PC-9 (cell line): ENCODE measurements at regions of chr9 and their contacts with region 1.

Region 1: DNA sequence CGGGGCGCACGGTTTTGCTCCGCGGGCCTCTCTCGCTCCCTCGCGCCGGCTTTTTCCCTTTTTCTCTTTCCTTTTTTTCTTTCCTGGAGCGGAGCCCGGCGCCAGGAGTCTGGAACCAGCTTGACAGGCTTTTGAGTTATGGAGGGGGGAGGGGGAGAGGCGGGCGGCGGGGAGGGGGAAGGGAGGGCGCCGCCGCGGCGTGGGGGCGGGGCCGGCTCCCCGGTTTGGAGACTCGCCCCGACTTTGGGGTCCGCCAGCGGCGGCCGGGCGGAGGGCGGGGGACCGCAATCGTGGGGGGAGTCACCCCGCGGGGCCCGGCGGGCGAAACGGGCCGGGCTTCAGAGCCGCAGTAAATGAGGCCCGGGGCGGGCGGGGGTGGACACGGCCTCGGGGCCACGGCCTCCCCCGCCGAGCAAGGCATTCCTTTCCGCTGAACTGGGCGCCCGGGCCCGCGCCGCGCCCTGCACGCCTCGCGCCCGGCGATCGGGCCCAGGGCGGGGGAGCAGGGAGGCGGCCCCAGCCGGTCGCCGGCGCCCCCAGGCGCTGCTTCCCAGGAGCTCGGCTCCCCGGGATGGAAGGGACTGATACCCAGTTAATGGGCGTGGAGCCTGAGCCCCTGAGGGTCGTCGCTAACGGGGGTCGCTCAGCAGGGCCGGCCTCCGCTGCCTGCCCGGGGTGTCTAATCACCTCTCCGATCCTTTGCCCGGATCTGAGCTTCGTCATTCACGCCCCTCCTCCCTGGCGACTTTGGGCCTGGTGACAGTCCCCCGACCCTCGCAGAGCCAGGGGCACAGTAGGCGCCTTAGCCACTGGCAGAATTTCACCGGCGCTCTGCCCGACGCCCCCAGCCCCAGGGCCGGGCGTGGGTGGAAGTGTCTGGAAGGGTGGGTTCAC is 138.1 kb downstream of the C9orf50 start:
- DNase-seq: peak; percentile 69 to 92
- H3K4me3 ChIP-seq: peak overlapping the region; percentile 88
- H3K27ac ChIP-seq: peak overlapping the region; percentile 99
- H3K4me1 ChIP-seq: peaks cover 82% of the 10 kb centered on the region
- H3K27me3 ChIP-seq: no peaks in the 10 kb centered on the region
- CTCF ChIP-seq: no peak

Region 2: GRCh38 chr9:129028192-129028957 is 454.4 kb before region 1 on chr9 and contains the start of gene SH3GLB2:
- CTCF ChIA-PET with region 1: no interaction called
- POLR2A ChIA-PET with region 1: no interaction called
- intact Hi-C with region 1: loop called (anchors 10 kb)
- DNase-seq: peak; percentile 73 to 98
- H3K4me3 ChIP-seq: peak within 1 kb of the TSS; percentile 63
- H3K27ac ChIP-seq: peak within 1 kb of the TSS; percentile 48
- H3K4me1 ChIP-seq: peaks cover 47% of the 10 kb centered on the region
- H3K27me3 ChIP-seq: no peaks in the 10 kb centered on the region
- CTCF ChIP-seq: peak; percentile 86
- total RNA-seq, gene SH3GLB2: 184 and 213 TPM in 2 replicates

Region 3: GRCh38 chr9:129258124-129258822 is 224.5 kb before region 1 on chr9:
- CTCF ChIA-PET with region 1: no interaction called
- POLR2A ChIA-PET with region 1: no interaction called
- intact Hi-C with region 1: no loop called
- DNase-seq: peak; percentile 78 to 90
- H3K4me3 ChIP-seq: peak overlapping the region; percentile 50
- H3K27ac ChIP-seq: no peak overlapping the region
- H3K4me1 ChIP-seq: peaks cover 16% of the 10 kb centered on the region
- H3K27me3 ChIP-seq: 0 out of 2 replicates have a peak, but pooled peaks cover 5% of the 10 kb centered on the region
- CTCF ChIP-seq: no peak

Region 4: GRCh38 chr9:129278391-129279237 is 204.2 kb before region 1 on chr9:
- CTCF ChIA-PET with region 1: no interaction called
- POLR2A ChIA-PET with region 1: interaction called, 4 read pairs
- intact Hi-C with region 1: loop called (anchors 2 kb)
- DNase-seq: peak; percentile 86 to 97
- H3K4me3 ChIP-seq: peak overlapping the region; percentile 58; the same call in 1 of the 2 replicates
- H3K27ac ChIP-seq: peak overlapping the region; percentile 79
- H3K4me1 ChIP-seq: peaks cover 51% of the 10 kb centered on the region
- H3K27me3 ChIP-seq: no peaks in the 10 kb centered on the region
- CTCF ChIP-seq: no peak

Region 5: DNA sequence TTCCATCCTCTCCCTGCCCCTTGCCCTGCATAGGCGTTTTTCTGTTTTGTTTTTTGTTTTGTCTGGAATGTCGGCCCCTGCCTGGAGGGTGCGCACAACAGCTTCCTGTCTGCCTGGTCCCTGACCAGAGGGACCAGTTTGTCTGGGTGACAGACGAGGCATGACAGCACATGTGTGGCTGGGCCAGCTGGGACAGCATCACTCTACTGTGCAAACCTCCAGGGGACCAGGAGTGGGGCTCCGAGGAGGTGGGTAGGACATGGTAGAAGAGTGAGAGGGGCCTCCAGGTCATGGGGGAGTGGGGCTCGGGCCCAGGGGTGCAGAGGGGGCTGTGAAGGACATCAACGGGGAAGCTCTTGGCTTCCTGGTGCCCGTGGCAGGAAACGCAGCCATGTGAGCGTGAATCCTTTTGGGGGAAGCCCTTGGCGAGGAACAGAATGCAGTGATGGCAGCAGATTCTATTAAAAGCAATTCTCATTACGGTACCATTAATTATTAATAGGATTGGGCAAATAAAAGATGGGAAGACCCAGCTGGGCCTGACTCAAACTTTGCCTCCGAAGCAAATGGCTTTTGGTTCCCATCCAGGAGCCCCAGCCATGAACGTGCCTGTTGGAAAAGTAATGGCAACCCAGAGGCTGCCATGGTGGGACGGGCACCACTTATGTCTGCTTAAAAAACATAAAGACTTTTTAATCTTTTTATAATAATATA is 120.3 kb before region 1 on chr9:
- CTCF ChIA-PET with region 1: no interaction called
- POLR2A ChIA-PET with region 1: no interaction called
- intact Hi-C with region 1: loop called (anchors 1 kb)
- DNase-seq: peak; percentile 77 to 80
- H3K4me3 ChIP-seq: no peak overlapping the region
- H3K27ac ChIP-seq: no peak overlapping the region
- H3K4me1 ChIP-seq: peaks cover 25% of the 10 kb centered on the region
- H3K27me3 ChIP-seq: no peaks in the 10 kb centered on the region
- CTCF ChIP-seq: peak; percentile 50

Region 6: GRCh38 chr9:129413537-129414376 is 69.0 kb before region 1 on chr9:
- CTCF ChIA-PET with region 1: no interaction called
- POLR2A ChIA-PET with region 1: no interaction called
- intact Hi-C with region 1: loop called (anchors 2 kb)
- DNase-seq: peak; percentile 87 to 99
- H3K4me3 ChIP-seq: peak overlapping the region; percentile 77
- H3K27ac ChIP-seq: peak overlapping the region; percentile 85
- H3K4me1 ChIP-seq: peaks cover 24% of the 10 kb centered on the region
- H3K27me3 ChIP-seq: no peaks in the 10 kb centered on the region
- CTCF ChIP-seq: no peak

Region 7: DNA sequence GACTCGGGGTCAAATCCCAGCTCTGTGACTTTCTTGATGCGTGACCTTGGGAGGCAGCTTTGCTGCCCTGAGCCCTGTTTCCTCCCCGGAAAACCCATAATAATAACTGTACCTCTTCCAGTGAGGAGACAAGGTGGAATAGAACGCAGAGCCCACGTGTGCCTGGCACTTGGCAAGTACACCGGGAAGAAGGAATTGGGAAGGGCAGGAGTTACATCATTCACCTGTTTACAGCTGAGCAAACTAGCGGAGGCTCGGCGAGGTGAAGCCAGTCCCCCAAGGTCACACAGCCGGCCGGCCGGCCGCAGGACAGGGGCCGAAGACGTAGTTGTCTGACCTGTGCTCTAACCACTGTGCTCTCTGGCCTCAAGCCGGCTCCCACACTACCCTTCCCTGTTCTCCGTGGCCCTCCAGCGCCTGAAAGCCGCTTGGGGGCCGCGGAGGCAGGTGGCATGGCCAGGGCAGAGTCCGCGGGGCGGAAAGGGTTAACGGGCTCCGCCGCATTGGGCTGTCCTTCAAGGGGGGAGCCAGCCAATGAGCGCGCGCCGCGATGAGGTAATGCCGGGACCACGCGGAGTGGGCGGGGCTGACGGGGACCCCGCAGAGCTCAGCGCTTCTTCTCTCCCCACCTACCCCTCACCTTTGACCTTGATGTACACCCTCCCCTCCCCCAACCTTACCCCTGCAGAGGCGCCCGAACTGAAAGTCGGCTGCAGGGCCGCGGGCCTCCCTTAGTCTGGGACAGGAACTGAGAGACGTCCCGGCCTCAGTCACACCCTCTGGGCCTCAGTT is 13.0 kb after region 1 on chr9:
- CTCF ChIA-PET with region 1: interaction called, 8 read pairs
- POLR2A ChIA-PET with region 1: interaction called, 10 read pairs
- intact Hi-C with region 1: no loop called
- DNase-seq: peak; percentile 78 to 95
- H3K4me3 ChIP-seq: peak overlapping the region; percentile 60
- H3K27ac ChIP-seq: peak overlapping the region; percentile 64
- H3K4me1 ChIP-seq: peaks cover 52% of the 10 kb centered on the region
- H3K27me3 ChIP-seq: no peaks in the 10 kb centered on the region
- CTCF ChIP-seq: no peak

Region 8: GRCh38 chr9:129650680-129651235 is 168.0 kb after region 1 on chr9:
- CTCF ChIA-PET with region 1: no interaction called
- POLR2A ChIA-PET with region 1: no interaction called
- intact Hi-C with region 1: no loop called
- DNase-seq: no peak
- H3K4me3 ChIP-seq: no peak overlapping the region
- H3K27ac ChIP-seq: no peak overlapping the region
- H3K4me1 ChIP-seq: no peaks in the 10 kb centered on the region
- H3K27me3 ChIP-seq: no peaks in the 10 kb centered on the region
- CTCF ChIP-seq: no peak

Region 9: GRCh38 chr9:129665389-129665775 is 182.6 kb after region 1 on chr9 and contains the start of gene PRRX2:
- CTCF ChIA-PET with region 1: no interaction called
- POLR2A ChIA-PET with region 1: interaction called, 11 read pairs
- intact Hi-C with region 1: no loop called
- DNase-seq: no peak
- H3K4me3 ChIP-seq: no peak within 1 kb of the TSS
- H3K27ac ChIP-seq: no peak within 1 kb of the TSS
- H3K4me1 ChIP-seq: no peaks in the 10 kb centered on the region
- H3K27me3 ChIP-seq: peaks cover 3% of the 10 kb centered on the region; the same call in 1 of the 2 replicates
- CTCF ChIP-seq: no peak
- total RNA-seq, gene PRRX2: 0.98 and 1.6 TPM in 2 replicates